ENCODE measurements at regions of chr4 and their contacts with region 1.

Region 1: DNA sequence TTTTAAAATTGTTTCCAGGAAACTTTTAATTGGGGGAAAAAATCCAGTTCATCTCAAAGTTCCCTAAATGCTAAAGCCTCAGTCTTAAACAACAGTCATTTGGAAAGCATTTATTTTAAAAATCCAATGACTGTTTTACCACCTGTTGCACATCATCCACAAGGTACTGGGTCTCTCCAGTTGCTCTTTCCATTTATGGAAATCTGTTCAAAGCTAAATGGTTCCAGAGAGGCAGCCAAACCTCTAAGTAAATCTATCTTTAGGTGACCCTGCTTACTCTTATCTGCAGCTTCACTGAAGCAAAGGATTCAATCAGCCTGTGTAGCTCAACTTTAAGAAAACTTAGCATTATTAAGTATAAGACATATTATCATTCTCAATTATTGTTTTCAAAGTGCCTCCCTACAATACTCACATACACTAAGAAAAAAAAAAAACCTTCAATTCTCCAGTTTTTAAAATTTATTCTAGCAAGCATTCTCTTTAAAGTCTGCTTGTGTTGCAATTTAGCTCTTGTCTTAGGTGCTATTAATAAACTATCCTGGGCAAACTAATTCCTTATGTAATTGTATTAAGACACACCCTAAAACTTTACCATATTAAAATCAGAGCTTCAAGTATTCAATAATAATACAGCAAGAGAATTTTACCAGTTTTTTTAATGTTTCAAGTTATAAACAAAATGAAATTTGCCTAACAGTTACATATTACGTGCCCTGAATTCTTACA is 60.6 kb downstream of the NOCT start:
- DNase-seq: no peak
- ATAC-seq: no peak
- H3K4me3 ChIP-seq: no peak overlapping the region
- H3K4me3 Mint-ChIP-seq: no peak overlapping the region
- H3K27ac ChIP-seq: no peak overlapping the region
- H3K27ac Mint-ChIP-seq: no peak overlapping the region
- H3K4me1 ChIP-seq: peaks cover 14 to 19% of the 10 kb centered on the region in 2 experiments
- H3K4me1 Mint-ChIP-seq: peaks cover 43 to 71% (median 71%) of the 10 kb centered on the region in 3 donors
- H3K27me3 ChIP-seq: no peaks in the 10 kb centered on the region
- H3K27me3 Mint-ChIP-seq: no peaks in the 10 kb centered on the region

Region 2: DNA sequence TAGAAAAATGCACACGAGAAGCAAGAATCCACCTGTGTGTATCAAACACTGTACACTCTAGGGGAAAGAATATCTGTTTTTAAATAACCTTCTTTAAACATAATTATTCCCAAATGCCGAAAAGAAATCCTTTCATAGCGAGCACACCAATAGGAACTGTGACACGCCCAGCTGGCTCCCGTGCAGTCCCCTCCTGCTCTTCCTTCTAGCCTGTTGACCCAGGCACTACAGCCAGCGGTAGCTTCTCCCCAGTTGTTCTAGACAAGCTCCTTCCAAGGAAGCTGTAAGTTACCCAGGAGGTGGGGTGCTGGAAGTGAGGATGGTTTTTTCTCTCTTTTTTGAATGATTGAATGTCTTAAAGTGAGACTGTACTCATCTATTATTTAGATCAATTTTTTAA is 80.1 kb before region 1 on chr4:
- CTCF ChIA-PET with region 1: no interaction called
- POLR2A ChIA-PET with region 1: interaction called in 1 of 2 experiments, 12 read pairs
- DNase-seq: no peak
- ATAC-seq: no peak
- H3K4me3 ChIP-seq: no peak overlapping the region
- H3K4me3 Mint-ChIP-seq: no peak overlapping the region
- H3K27ac ChIP-seq: no peak overlapping the region
- H3K27ac Mint-ChIP-seq: no peak overlapping the region
- H3K4me1 ChIP-seq: no peaks in the 10 kb centered on the region
- H3K4me1 Mint-ChIP-seq: no peaks in the 10 kb centered on the region
- H3K27me3 ChIP-seq: no peaks in the 10 kb centered on the region
- H3K27me3 Mint-ChIP-seq: no peaks in the 10 kb centered on the region

Region 3: DNA sequence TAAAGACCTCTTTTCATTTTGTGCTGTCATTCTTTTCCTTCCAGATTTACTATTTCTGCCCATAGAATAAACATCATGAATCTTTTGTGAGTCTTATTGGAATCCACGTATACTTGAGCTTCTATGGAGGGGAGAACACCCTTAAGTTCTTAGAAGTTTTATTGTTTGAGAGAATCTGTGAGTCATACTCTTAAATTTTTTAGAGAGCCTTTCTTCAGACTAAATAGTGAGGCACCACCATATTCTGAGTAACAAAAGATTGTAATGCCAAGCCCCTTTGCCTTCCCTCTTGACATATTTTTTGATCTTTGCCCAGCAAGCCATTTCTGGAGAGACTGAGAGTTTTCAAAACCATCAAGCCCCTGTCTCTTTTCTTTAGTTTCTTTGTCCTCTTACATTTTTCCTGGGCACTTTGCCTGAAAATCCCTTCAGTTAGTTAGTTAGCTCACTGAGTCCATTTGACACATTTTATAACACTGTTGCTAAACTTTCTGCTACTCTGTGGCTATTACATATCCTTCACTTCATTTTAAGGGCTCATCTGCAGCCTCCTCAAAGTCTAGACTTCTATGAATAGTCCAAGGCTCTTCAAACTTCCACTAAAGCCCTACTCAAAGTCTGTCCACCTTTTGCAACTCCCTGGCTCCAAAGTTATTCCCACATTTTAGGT is 291.4 kb after region 1 on chr4:
- CTCF ChIA-PET with region 1: interaction called in 1 of 2 experiments, 4 read pairs
- POLR2A ChIA-PET with region 1: interaction called in 1 of 2 experiments, 15 read pairs
- DNase-seq: no peak
- ATAC-seq: no peak
- H3K4me3 ChIP-seq: no peak overlapping the region
- H3K4me3 Mint-ChIP-seq: no peak overlapping the region
- H3K27ac ChIP-seq: no peak overlapping the region
- H3K27ac Mint-ChIP-seq: peak overlapping the region; percentile 32 to 34
- H3K4me1 ChIP-seq: no peaks in the 10 kb centered on the region
- H3K4me1 Mint-ChIP-seq: peaks cover 0 to 2% (median 1%) of the 10 kb centered on the region in 3 donors
- H3K27me3 ChIP-seq: no peaks in the 10 kb centered on the region
- H3K27me3 Mint-ChIP-seq: no peaks in the 10 kb centered on the region